BJ (cell line): ENCODE measurements at regions of chr7 and their contacts with region 1.

Region 1: DNA sequence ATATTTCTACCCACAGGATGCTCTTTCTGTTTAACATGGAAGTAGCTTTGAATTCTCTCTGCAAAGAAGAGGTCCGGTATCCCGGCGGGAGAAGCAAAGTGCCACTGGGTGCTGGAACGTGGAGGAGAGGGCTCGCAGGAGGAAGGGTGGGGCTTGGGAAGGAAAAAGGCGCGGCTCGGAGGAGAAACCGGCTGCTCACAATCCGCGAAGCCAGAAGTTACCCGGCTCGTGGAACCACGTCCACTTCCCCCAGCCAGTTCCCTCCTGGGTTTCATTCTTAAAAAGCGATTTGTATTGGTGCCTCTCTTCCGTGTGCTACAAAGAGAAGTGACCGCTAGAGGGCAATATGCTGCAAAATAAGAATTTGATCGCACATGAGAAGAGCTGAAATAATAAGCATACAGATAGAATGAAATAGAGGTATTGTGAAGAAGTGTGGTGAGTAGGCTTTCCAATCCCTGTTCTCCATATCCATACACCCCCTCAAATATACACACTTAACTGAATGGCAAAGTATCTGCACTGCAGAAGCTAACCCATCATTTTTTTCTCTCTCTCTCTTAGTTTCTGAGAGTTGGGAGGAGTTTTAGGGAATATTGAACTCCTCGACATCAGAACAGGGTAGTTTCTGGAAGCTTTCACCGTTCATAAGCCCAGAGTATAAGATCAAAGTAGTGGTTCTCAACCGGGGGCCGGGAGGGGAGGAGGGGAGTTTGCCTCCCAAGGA is 31.1 kb downstream of the TRIL start:
- DNase-seq: peak; percentile 39
- H3K4me3 ChIP-seq: peak overlapping the region; percentile 58
- H3K27me3 ChIP-seq: peaks cover 6% of the 10 kb centered on the region
- CTCF ChIP-seq: peak; percentile 78

Region 2: DNA sequence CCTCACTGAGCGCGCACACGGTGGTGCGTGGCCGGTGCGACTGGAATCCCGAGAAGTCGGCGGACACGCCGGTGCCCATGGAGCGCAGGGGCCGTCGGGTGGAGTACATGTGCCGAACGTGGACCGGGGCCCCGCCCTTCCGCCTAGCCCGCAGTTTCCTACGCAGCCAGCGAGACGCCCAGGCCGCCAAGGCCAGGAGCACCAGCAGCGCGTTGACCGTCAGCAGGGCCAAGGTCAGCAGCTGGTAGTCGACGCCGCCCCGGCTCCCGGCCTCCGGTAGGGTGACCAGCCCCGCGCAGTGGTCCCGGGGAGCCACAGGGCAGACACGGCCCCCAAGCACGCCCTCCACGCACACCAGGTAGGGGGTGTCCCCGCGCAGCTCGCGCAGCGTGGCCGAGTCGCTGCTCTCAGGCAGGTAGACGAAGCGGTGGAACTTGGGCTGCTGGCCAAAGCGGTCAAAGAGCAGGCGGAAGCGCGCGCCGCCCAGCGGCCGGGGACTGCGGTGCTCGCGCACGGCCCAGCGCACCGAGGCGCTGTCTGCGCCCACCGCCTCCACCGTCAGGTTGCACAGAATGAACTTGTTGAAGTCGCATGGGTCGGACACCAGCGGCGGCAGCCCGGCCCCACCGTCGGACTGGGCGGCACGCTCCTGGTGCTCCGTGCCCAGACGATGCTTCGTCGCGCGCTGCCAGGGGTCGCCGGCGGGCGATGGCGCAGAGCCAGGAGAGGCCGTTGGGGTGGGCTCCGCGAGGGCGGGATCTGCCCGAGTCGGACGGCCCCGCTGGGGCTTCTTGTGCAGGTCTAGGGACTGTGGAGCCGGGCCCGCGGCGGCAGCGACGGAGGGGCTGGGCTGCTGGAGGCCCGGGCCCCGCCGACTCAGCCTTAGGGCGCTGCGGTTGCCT is 28.9 kb after region 1 on chr7:
- CTCF ChIA-PET with region 1: interaction called, 24 read pairs
- POLR2A ChIA-PET with region 1: no interaction called
- DNase-seq: no peak
- H3K4me3 ChIP-seq: no peak overlapping the region; the same call in 1 of the 2 replicates
- H3K27me3 ChIP-seq: peaks cover 38% of the 10 kb centered on the region
- CTCF ChIP-seq: peak; percentile 35; the same call in 1 of the 2 replicates

Region 3: DNA sequence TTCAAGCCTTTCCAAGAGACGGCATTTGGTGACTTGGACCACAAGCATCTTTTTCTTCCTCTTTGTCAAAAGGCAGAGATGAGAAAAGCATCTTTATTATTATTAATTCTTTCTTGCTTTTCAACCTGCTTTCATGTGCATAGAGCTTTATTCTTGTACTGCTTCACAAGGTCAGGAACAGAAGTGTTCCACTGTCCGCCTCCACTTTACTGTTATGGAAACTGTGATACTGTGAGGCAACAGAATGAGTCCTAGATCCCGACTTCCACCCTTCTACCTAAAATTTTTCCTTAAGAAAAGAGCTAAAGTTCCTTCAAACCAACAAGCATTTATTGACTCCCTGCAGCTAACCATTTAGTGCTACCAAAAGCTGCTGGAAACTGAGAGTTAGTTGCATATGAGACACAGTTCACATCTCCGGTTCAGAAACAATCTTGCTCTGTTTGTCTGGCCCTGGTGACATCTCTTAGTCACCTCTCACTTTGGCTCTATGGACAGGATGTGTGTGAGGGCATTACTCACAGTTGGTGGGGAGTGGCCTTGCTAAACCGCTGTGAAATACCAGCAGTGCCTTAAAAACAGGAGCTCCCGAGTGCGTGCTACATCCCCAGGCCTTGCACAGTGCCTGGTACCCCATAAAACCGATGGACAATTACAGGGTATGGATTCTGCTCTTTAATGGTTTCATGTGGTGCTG is 108.2 kb after region 1 on chr7:
- CTCF ChIA-PET with region 1: interaction called, 11 read pairs
- POLR2A ChIA-PET with region 1: no interaction called
- DNase-seq: peak; percentile 19
- H3K4me3 ChIP-seq: no peak overlapping the region
- H3K27me3 ChIP-seq: no peaks in the 10 kb centered on the region
- CTCF ChIP-seq: no peak

Region 4: GRCh38 chr7:29084832-29085231 is 157.8 kb after region 1 on chr7:
- CTCF ChIA-PET with region 1: interaction called, 555 read pairs
- POLR2A ChIA-PET with region 1: interaction called, 11 read pairs
- DNase-seq: no peak
- H3K4me3 ChIP-seq: no peak overlapping the region
- H3K27me3 ChIP-seq: no peaks in the 10 kb centered on the region
- CTCF ChIP-seq: no peak

Region 5: DNA sequence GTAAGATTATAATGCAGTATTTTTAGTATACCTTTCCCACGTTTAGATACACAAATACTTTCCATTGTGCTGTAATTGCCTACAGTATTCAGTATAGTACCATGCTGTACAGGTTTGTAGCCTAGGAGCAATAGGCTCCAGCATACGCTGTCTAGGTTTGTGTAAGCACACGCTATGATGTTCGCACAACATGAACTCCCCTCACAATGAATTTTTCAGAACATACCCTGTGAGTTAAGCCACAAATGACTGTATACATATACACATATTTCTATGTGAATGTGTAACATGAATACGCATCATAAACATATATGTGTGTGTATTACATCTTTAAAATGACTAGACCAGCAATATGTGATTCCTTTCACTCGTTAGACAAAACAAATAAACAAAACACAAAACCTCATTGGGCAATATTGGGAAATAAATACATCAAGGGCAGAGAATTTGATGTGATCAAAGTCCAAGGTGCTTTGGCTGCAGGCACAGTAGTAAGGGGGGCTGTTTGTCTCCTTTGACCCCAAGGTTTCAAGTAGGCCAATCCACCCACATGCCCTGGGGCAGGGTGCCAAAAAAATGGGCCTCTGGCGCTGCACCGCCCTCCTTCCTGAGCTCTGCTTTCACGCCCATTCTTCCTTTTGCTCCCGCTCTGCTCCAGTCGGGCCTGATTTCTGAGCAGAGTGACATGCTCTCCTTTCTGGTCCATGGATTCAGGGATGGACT is 301.4 kb after region 1 on chr7:
- CTCF ChIA-PET with region 1: no interaction called
- POLR2A ChIA-PET with region 1: no interaction called
- DNase-seq: no peak
- H3K4me3 ChIP-seq: no peak overlapping the region
- H3K27me3 ChIP-seq: no peaks in the 10 kb centered on the region
- CTCF ChIP-seq: no peak

Region 6: DNA sequence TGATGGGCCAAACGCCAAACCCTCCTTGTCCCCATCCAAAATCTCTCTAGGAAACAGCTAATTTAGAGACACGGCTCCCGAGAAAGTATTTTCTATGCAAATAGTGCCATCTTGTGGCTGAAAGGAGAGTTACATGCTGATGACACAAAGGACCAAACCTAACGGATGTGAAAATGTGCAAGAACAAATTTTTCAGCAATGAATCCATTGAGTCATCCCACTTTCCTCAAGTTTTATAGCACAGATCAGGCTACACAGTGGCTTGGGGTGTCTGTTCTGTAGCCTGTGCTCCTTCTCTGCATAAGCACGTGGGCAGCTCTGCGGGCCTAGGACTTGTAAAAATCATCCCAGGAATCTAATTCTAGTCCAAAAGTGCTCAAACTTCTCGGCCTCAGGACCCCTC is 481.8 kb after region 1 on chr7:
- CTCF ChIA-PET with region 1: interaction called, 129 read pairs
- POLR2A ChIA-PET with region 1: no interaction called
- DNase-seq: peak; percentile 70
- H3K4me3 ChIP-seq: no peak overlapping the region
- H3K27me3 ChIP-seq: no peaks in the 10 kb centered on the region; the same call in 1 of the 2 replicates
- CTCF ChIP-seq: peak; percentile 75